CD4-positive, alpha-beta memory T cell (primary cell): ENCODE measurements at regions of chr19 and their contacts with region 1.

Region 1: DNA sequence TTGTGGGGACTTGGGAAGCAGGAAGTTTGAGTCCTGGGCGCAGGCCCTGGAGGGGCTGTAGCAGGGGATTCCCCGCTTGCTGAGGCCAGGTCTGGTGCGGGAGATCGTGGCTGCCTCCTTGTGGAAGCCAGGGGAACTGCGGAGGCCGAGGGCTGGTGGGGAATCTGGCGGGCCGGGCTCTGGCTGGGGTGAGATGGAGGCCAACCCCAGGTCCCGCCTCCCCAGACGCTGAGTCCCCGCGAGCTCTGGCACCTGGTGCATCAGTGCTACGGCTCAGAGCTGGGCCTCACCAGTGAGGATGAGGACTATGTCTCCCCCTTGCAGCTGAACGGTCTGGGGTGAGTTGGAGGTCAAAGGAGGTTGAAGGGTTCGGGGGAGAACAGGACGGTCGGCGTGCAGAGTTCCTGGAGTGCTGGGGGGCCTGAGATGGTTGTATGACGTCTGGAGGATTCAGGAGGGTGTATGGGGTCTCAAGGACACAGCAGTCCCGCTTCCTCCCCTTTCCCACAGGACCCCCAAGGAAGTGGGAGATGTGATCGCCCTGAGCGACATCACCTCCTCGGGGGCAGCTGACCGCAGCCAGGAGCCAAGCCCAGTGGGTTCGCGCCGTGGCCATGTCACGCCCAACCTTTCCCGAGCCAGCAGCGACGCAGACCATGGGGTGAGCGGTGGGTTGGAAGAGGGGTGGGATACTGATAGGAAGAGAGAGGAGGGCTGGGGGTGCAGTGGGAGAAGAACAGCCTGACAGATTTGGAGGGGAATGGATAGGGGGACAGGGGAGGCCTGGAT is 13.1 kb downstream of the GRAMD1A start:
- DNase-seq: peak; percentile 77 to 87 (median 79)
- H3K4me3 ChIP-seq: peak overlapping the region in 1 of 2 donors; percentile 51
- H3K4me3 Mint-ChIP-seq: peak overlapping the region; percentile 66 to 91 (median 85)
- H3K27ac ChIP-seq: peak overlapping the region; percentile 64
- H3K27ac Mint-ChIP-seq: peak overlapping the region; percentile 89 to 98 (median 96)
- H3K4me1 ChIP-seq: peaks cover 76% of the 10 kb centered on the region
- H3K4me1 Mint-ChIP-seq: peaks cover 47 to 73% (median 58%) of the 10 kb centered on the region in 4 donors
- H3K27me3 ChIP-seq: no peaks in the 10 kb centered on the region
- H3K27me3 Mint-ChIP-seq: no peaks in the 10 kb centered on the region

Region 2: GRCh38 chr19:34317311-34317927 is 695.8 kb before region 1 on chr19:
- CTCF ChIA-PET with region 1: no interaction called
- POLR2A ChIA-PET with region 1: no interaction called
- intact Hi-C with region 1: no loop called
- DNase-seq: peak; percentile 27 to 78 (median 44)
- H3K4me3 ChIP-seq: no peak overlapping the region
- H3K4me3 Mint-ChIP-seq: peak overlapping the region in 7 of 8 donors; percentile 32 to 73 (median 49)
- H3K27ac ChIP-seq: peak overlapping the region; percentile 7
- H3K27ac Mint-ChIP-seq: peak overlapping the region; percentile 67 to 88 (median 81)
- H3K4me1 ChIP-seq: peaks cover 30% of the 10 kb centered on the region
- H3K4me1 Mint-ChIP-seq: peaks cover 28 to 49% (median 43%) of the 10 kb centered on the region in 4 donors
- H3K27me3 ChIP-seq: no peaks in the 10 kb centered on the region
- H3K27me3 Mint-ChIP-seq: no peaks in the 10 kb centered on the region

Region 3: DNA sequence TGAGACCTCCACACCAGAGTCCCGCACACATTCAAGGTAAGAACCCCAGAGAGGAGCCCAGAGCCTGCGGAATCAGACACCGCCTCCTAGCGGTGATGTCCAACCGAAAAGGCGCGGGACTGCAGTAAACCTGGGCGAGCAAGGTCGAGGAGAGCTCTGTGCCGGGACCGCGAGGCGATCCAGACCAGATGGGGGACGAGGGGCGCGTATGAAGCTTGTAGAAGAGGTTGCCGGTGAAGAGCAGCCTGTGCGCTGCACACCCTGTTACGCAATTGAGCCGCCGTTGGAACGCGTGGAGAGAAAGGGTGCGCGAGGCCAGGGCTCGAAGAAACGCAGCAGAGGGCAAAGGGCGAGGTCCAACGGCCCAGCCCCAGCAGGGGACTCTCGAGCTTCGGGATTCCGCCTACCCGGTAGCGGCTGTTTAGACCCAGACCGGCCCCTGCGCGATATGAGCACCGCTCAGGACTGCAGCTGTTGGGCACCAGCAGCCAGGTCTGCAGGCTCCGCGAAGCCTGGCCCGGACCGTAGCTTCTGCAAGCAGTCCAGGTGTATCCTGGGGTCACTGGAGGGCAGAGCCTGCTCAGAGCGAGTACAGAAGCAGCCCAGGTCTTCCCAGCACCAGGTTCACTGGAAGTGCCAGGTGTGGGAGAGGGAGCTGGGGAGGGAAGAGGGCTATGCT is 174.3 kb before region 1 on chr19:
- CTCF ChIA-PET with region 1: interaction called, 4 read pairs
- POLR2A ChIA-PET with region 1: interaction called, 11 read pairs
- intact Hi-C with region 1: loop called (anchors 2 kb)
- DNase-seq: peak in 3 of 5 donors; percentile 15 to 29 (median 17)
- H3K4me3 ChIP-seq: no peak overlapping the region
- H3K4me3 Mint-ChIP-seq: peak overlapping the region in 5 of 8 donors; percentile 53 to 73 (median 66)
- H3K27ac ChIP-seq: no peak overlapping the region
- H3K27ac Mint-ChIP-seq: peak overlapping the region in 3 of 7 donors; percentile 42 to 69 (median 52)
- H3K4me1 ChIP-seq: peaks cover 8% of the 10 kb centered on the region
- H3K4me1 Mint-ChIP-seq: peaks cover 10 to 30% (median 18%) of the 10 kb centered on the region in 4 donors
- H3K27me3 ChIP-seq: no peaks in the 10 kb centered on the region
- H3K27me3 Mint-ChIP-seq: peaks cover 0 to 2% of the 10 kb centered on the region in 2 donors

Region 4: GRCh38 chr19:34853369-34853768 is 159.9 kb before region 1 on chr19:
- CTCF ChIA-PET with region 1: no interaction called
- POLR2A ChIA-PET with region 1: no interaction called
- intact Hi-C with region 1: no loop called
- DNase-seq: no peak
- H3K4me3 ChIP-seq: no peak overlapping the region
- H3K4me3 Mint-ChIP-seq: no peak overlapping the region
- H3K27ac ChIP-seq: no peak overlapping the region
- H3K27ac Mint-ChIP-seq: no peak overlapping the region
- H3K4me1 ChIP-seq: peaks cover 25% of the 10 kb centered on the region
- H3K4me1 Mint-ChIP-seq: peaks cover 32 to 76% (median 47%) of the 10 kb centered on the region in 4 donors
- H3K27me3 ChIP-seq: no peaks in the 10 kb centered on the region
- H3K27me3 Mint-ChIP-seq: no peaks in the 10 kb centered on the region

Region 5: DNA sequence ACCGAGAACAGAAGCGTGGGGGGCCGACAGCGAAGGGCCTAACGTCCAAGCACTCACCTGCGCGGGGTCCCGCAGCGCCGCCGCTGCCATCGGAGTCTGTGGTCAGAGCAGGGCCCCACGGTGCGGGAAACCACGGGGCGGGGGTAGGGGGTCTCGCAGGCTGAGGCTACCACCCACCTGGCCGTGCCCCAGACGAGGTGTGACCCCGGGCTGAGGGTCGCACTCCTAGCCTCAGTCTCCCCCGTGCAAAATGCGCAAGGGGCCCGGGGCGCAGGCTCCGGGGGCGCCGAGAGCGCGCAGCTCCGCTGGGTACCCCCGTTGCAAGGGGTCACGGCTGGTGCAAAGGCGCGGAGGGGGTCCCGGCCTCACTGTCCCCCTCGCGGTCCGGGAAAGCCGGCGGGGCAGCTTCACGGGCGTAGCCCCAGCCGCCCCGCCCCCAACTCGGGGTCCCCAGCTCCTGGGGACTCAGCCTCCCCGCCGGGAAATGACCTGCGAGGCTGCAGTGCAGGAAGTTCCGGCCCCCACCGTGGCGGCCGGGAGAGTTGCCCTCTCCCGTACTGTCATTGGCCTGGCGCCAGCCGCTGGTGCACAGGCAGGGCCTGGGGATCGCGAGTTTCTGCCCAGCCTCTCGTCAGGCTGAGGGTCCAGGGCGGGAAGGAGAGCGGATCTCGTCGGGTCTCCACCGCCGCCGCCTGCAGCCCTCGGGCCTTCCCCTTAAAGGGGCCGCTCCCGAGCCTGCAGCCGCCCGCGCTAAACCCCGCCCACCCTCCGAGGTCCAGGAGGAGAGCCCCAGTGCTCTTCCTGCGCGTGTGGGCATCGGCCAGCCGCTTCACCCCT is 49.4 kb before region 1 on chr19 and contains the start of gene ZNF792:
- CTCF ChIA-PET with region 1: interaction called, 24 read pairs
- POLR2A ChIA-PET with region 1: interaction called, 34 read pairs
- intact Hi-C with region 1: no loop called
- DNase-seq: peak; percentile 36 to 57 (median 39)
- H3K4me3 ChIP-seq: peak within 1 kb of the TSS; percentile 62 to 80
- H3K4me3 Mint-ChIP-seq: peak within 1 kb of the TSS; percentile 93 to 99 (median 97)
- H3K27ac ChIP-seq: peak within 1 kb of the TSS; percentile 49
- H3K27ac Mint-ChIP-seq: peak within 1 kb of the TSS; percentile 88 to 97 (median 93)
- H3K4me1 ChIP-seq: peaks cover 18% of the 10 kb centered on the region
- H3K4me1 Mint-ChIP-seq: peaks cover 18 to 28% (median 24%) of the 10 kb centered on the region in 4 donors
- H3K27me3 ChIP-seq: no peaks in the 10 kb centered on the region
- H3K27me3 Mint-ChIP-seq: no peaks in the 10 kb centered on the region
- total RNA-seq, gene ZNF792: 33.9 to 34.7 TPM

Region 6: GRCh38 chr19:34985249-34986022 is 27.8 kb before region 1 on chr19:
- CTCF ChIA-PET with region 1: interaction called, 21 read pairs
- POLR2A ChIA-PET with region 1: interaction called, 16 read pairs
- intact Hi-C with region 1: no loop called
- DNase-seq: peak in 1 of 5 donors; percentile 15
- H3K4me3 ChIP-seq: no peak overlapping the region
- H3K4me3 Mint-ChIP-seq: peak overlapping the region; percentile 7 to 66 (median 50)
- H3K27ac ChIP-seq: no peak overlapping the region
- H3K27ac Mint-ChIP-seq: peak overlapping the region in 6 of 7 donors; percentile 19 to 83 (median 60)
- H3K4me1 ChIP-seq: peaks cover 10% of the 10 kb centered on the region
- H3K4me1 Mint-ChIP-seq: peaks cover 12 to 19% (median 13%) of the 10 kb centered on the region in 4 donors
- H3K27me3 ChIP-seq: no peaks in the 10 kb centered on the region
- H3K27me3 Mint-ChIP-seq: peaks cover 0 to 2% of the 10 kb centered on the region in 2 donors

Region 7: GRCh38 chr19:35030257-35031071 is 17.2 kb after region 1 on chr19 and contains the start of gene SCN1B:
- CTCF ChIA-PET with region 1: interaction called, 3 read pairs
- POLR2A ChIA-PET with region 1: interaction called, 26 read pairs
- intact Hi-C with region 1: no loop called
- DNase-seq: peak; percentile 39 to 67 (median 42)
- H3K4me3 ChIP-seq: peak within 1 kb of the TSS in 1 of 2 donors; percentile 35
- H3K4me3 Mint-ChIP-seq: peak within 1 kb of the TSS; percentile 75 to 88 (median 84)
- H3K27ac ChIP-seq: no peak within 1 kb of the TSS
- H3K27ac Mint-ChIP-seq: peak within 1 kb of the TSS in 4 of 7 donors; percentile 36 to 71 (median 44)
- H3K4me1 ChIP-seq: peaks cover 13% of the 10 kb centered on the region
- H3K4me1 Mint-ChIP-seq: peaks cover 7 to 10% (median 8%) of the 10 kb centered on the region in 4 donors
- H3K27me3 ChIP-seq: no peaks in the 10 kb centered on the region
- H3K27me3 Mint-ChIP-seq: peaks cover 7% of the 10 kb centered on the region in 2 donors
- total RNA-seq, gene SCN1B: 1.4 to 1.5 TPM

Region 8: GRCh38 chr19:35090506-35091237 is 77.4 kb after region 1 on chr19:
- CTCF ChIA-PET with region 1: interaction called, 3 read pairs
- POLR2A ChIA-PET with region 1: no interaction called
- intact Hi-C with region 1: loop called (anchors 2 kb)
- DNase-seq: peak in 4 of 5 donors; percentile 25 to 43 (median 30)
- H3K4me3 ChIP-seq: no peak overlapping the region
- H3K4me3 Mint-ChIP-seq: peak overlapping the region in 1 of 8 donors; percentile 13
- H3K27ac ChIP-seq: no peak overlapping the region
- H3K27ac Mint-ChIP-seq: no peak overlapping the region
- H3K4me1 ChIP-seq: peaks cover 15% of the 10 kb centered on the region
- H3K4me1 Mint-ChIP-seq: peaks cover 3 to 13% (median 5%) of the 10 kb centered on the region in 4 donors
- H3K27me3 ChIP-seq: no peaks in the 10 kb centered on the region
- H3K27me3 Mint-ChIP-seq: peaks cover 6 to 10% of the 10 kb centered on the region in 2 donors